Breast epithelium (tissue), 4 donors: ENCODE measurements at regions of chr3 and their contacts with region 1.

Region 1: DNA sequence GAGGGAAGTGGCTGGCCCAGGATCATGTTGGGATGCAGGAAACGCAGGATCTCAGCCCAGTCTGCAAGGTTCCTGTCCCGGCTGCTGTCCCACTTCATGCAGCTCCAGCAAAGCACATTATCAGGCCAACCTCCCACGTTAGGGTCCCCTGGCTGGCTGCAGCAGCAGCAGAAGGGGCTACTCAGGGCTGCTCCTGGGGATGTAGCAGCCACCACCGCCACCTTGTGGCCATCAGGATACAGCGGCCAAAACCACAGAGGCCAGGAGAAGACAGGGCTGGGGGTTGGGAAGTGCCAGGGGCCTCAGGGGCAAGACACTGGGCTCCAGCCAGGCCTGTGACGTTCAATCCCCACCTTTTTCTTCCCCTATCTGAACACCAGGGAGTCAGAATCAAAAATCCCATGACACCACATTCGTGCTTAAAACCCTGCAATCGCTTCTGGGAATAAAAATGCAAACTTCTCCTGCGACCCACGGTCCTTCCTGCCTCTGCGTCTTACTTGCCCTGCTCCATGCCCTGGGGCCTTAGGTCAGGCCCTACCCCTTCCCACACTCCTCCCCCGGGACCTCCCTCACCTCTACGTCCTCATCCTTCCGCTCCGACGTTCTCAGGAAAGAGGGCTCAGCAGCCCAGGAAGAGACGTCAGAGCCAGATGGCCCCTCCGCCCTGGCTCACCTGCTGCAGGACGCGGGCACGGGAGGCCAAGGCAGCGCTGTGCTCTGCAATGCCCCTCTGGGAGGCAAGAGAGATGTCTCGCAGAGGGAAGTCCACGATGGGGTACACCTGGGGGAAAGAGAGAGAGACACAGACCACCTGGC is 21.5 kb downstream of the SSUH2 start:
- DNase-seq: peak in 1 of 2 donors; percentile 35
- H3K4me3 ChIP-seq: peak overlapping the region in 1 of 3 donors; percentile 40
- H3K27ac ChIP-seq: no peak overlapping the region
- H3K4me1 ChIP-seq: no peaks in the 10 kb centered on the region
- H3K27me3 ChIP-seq: no peaks in the 10 kb centered on the region
- CTCF ChIP-seq: peak; percentile 89 to 91 (median 90)
- POLR2A ChIP-seq: no peak

Region 2: DNA sequence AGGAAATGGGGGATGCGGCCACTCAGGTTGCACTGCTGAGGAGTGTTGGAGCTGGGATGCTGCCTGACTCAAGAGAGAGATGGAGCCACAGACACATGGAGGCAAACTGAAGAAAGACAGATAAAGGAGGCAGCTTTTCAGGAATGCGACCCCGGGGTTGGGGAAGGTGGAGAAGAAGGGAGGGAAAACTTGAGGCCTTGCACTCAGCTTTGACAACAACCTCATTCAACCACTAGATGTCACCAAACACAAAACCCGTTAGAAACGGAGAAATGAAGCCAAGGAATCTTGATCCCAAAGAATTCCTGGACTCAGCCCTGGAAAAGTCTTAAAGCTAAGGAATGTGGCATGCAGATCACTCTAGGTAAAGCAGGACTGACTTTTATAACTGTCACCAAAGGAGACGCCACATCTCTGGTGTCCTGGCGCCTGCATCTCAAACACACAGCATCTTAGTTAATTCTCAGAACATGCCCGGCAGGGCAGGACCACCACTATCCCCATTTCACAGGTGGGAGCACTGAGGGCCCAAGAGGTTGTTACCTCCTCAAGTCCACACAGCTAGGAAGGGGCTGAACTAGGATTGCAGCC is 181.0 kb before region 1 on chr3:
- intact Hi-C with region 1: loop called (anchors 5 kb)
- DNase-seq: no peak
- H3K4me3 ChIP-seq: no peak overlapping the region
- H3K27ac ChIP-seq: no peak overlapping the region
- H3K4me1 ChIP-seq: peaks cover 2 to 4% of the 10 kb centered on the region in 2 donors
- H3K27me3 ChIP-seq: no peaks in the 10 kb centered on the region
- CTCF ChIP-seq: peak; percentile 43 to 86 (median 80)
- POLR2A ChIP-seq: no peak

Region 3: GRCh38 chr3:8567784-8568575 is 55.1 kb before region 1 on chr3:
- intact Hi-C with region 1: loop called (anchors 2 kb)
- DNase-seq: no peak
- H3K4me3 ChIP-seq: no peak overlapping the region
- H3K27ac ChIP-seq: no peak overlapping the region
- H3K4me1 ChIP-seq: no peaks in the 10 kb centered on the region
- H3K27me3 ChIP-seq: no peaks in the 10 kb centered on the region
- CTCF ChIP-seq: no peak
- POLR2A ChIP-seq: no peak

Region 4: DNA sequence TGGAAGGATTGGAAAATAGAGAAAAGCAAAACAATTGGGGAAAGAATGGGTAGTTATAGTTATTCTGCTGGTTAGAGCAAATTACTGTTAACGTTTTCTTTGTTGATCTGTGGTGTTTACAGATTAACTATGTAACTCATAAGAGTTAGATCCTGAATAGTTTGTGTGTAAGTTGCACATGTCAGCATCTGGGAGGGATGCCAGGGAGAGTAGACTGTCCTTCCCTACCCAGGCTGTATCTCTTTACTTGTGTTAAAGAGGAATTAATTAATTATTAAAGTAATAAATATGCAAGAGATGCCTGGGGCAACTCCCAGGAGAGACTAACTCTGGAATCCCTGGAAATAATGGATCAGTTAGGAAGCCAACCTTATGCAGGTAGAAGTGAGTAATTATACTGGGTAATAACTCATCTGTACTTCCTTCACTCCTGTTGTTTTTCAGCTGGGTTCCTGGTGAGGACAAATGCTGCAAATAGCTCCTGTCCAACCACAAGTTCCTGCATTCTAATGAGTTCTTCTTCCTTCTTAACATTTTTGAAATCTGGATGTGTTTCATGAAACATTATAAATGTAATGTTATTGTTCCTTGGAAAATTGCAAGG is 1650.7 kb after region 1 on chr3:
- intact Hi-C with region 1: loop called (anchors 10 kb)
- DNase-seq: peak in 1 of 2 donors; percentile 28
- H3K4me3 ChIP-seq: no peak overlapping the region
- H3K27ac ChIP-seq: peak overlapping the region in 1 of 2 donors; percentile 19
- H3K4me1 ChIP-seq: peaks cover 0 to 2% of the 10 kb centered on the region in 2 donors
- H3K27me3 ChIP-seq: no peaks in the 10 kb centered on the region
- CTCF ChIP-seq: no peak
- POLR2A ChIP-seq: no peak